Activated naive CD4-positive, alpha-beta T cell treated with anti-CD3 and anti-CD28 coated beads, Interleukin-2, amount 10 ng/mL, durations not matched to agents 7 days and 5 days (primary cell): ENCODE measurements at regions of chr2 and their contacts with region 1.

Region 1: GRCh38 chr2:44955593-44956392 is 14.3 kb downstream of the SIX3 start:
- DNase-seq: peak; percentile 83
- H3K4me3 Mint-ChIP-seq: no peak overlapping the region
- H3K27ac Mint-ChIP-seq: no peak overlapping the region
- H3K4me1 Mint-ChIP-seq: peaks cover 20% of the 10 kb centered on the region
- H3K27me3 Mint-ChIP-seq: peaks cover 80% of the 10 kb centered on the region

Region 2: GRCh38 chr2:44044281-44044720 is 911.5 kb before region 1 on chr2:
- CTCF ChIA-PET with region 1: interaction called, 18 read pairs
- DNase-seq: peak; percentile 87
- H3K4me3 Mint-ChIP-seq: no peak overlapping the region
- H3K27ac Mint-ChIP-seq: no peak overlapping the region
- H3K4me1 Mint-ChIP-seq: no peaks in the 10 kb centered on the region
- H3K27me3 Mint-ChIP-seq: peaks cover 14% of the 10 kb centered on the region

Region 3: GRCh38 chr2:44392338-44392943 is 563.4 kb before region 1 on chr2:
- CTCF ChIA-PET with region 1: interaction called, 37 read pairs
- DNase-seq: peak; percentile 60
- H3K4me3 Mint-ChIP-seq: no peak overlapping the region
- H3K27ac Mint-ChIP-seq: no peak overlapping the region
- H3K4me1 Mint-ChIP-seq: no peaks in the 10 kb centered on the region
- H3K27me3 Mint-ChIP-seq: no peaks in the 10 kb centered on the region

Region 4: DNA sequence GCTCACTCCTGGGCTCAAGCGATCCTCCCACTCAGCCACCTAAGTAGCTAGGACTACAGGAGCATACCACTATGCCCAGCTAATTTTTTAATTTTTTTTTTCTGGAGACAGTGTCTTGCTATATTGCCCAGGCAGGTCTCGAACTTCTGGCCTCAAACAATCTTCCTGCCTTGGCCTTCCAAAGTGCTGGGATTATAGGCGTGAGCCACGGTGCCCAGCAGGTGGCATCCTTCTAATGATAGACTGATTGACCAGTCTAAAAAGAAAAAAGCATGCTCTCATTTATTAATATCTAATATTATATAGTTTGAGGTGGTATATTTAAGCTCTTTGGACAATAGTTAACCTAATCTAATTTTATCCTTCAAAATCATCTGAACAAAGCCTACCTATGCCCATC is 395.4 kb before region 1 on chr2:
- CTCF ChIA-PET with region 1: interaction called, 15 read pairs
- DNase-seq: no peak
- H3K4me3 Mint-ChIP-seq: no peak overlapping the region
- H3K27ac Mint-ChIP-seq: no peak overlapping the region
- H3K4me1 Mint-ChIP-seq: no peaks in the 10 kb centered on the region
- H3K27me3 Mint-ChIP-seq: no peaks in the 10 kb centered on the region

Region 5: GRCh38 chr2:44906972-44907371 is 48.8 kb before region 1 on chr2:
- CTCF ChIA-PET with region 1: no interaction called
- DNase-seq: no peak
- H3K4me3 Mint-ChIP-seq: no peak overlapping the region
- H3K27ac Mint-ChIP-seq: no peak overlapping the region
- H3K4me1 Mint-ChIP-seq: no peaks in the 10 kb centered on the region
- H3K27me3 Mint-ChIP-seq: peaks cover 25% of the 10 kb centered on the region